ENCODE measurements at regions of chr4 and their contacts with region 1.

Region 1: DNA sequence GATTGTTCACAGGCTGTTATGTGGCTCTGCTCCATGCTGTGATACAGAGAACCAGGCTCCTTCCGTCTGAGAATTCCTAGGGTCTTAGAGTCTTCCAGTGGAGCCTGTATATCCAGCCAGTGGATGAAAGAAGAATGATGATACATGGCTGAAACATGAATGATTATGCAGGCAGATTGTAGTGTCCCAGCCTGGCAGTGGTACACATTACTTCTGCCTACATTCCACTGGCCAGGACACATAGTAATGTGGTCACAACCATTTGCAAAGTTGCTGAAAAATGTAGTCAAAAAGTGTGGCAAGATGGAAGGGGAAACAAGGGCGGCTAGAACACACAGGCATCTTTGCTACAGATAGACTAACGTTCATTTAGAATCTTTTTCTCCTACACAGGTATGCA is 4.5 kb upstream of the GBA3 start:
- DNase-seq: no peak
- H3K4me3 ChIP-seq: no peak overlapping the region
- H3K4me3 Mint-ChIP-seq: no peak overlapping the region
- H3K27ac Mint-ChIP-seq: no peak overlapping the region
- H3K4me1 ChIP-seq: no peaks in the 10 kb centered on the region
- H3K4me1 Mint-ChIP-seq: peaks cover 27% of the 10 kb centered on the region
- H3K27me3 ChIP-seq: no peaks in the 10 kb centered on the region
- H3K27me3 Mint-ChIP-seq: no peaks in the 10 kb centered on the region
- CTCF ChIP-seq: no peak

Region 2: GRCh38 chr4:22607382-22607781 is 80.9 kb before region 1 on chr4:
- CTCF ChIA-PET with region 1: interaction called, 3 read pairs
- POLR2A ChIA-PET with region 1: no interaction called
- intact Hi-C with region 1: loop called (anchors 10 kb)
- DNase-seq: peak; percentile 51 to 57
- H3K4me3 ChIP-seq: no peak overlapping the region
- H3K4me3 Mint-ChIP-seq: no peak overlapping the region
- H3K27ac Mint-ChIP-seq: no peak overlapping the region
- H3K4me1 ChIP-seq: no peaks in the 10 kb centered on the region
- H3K4me1 Mint-ChIP-seq: no peaks in the 10 kb centered on the region
- H3K27me3 ChIP-seq: no peaks in the 10 kb centered on the region
- H3K27me3 Mint-ChIP-seq: peaks cover 6% of the 10 kb centered on the region
- CTCF ChIP-seq: peak; percentile 45 to 78

Region 3: GRCh38 chr4:22801391-22801790 is 113.2 kb after region 1 on chr4:
- CTCF ChIA-PET with region 1: interaction called, 10 read pairs
- POLR2A ChIA-PET with region 1: no interaction called
- intact Hi-C with region 1: no loop called
- DNase-seq: no peak
- H3K4me3 ChIP-seq: no peak overlapping the region
- H3K4me3 Mint-ChIP-seq: no peak overlapping the region
- H3K27ac Mint-ChIP-seq: no peak overlapping the region
- H3K4me1 ChIP-seq: no peaks in the 10 kb centered on the region
- H3K4me1 Mint-ChIP-seq: no peaks in the 10 kb centered on the region
- H3K27me3 ChIP-seq: no peaks in the 10 kb centered on the region
- H3K27me3 Mint-ChIP-seq: peaks cover 3% of the 10 kb centered on the region
- CTCF ChIP-seq: no peak

Measured in Caco-2 (cell line).